ENCODE measurements at regions of chr12 and their contacts with region 1.

Region 1: DNA sequence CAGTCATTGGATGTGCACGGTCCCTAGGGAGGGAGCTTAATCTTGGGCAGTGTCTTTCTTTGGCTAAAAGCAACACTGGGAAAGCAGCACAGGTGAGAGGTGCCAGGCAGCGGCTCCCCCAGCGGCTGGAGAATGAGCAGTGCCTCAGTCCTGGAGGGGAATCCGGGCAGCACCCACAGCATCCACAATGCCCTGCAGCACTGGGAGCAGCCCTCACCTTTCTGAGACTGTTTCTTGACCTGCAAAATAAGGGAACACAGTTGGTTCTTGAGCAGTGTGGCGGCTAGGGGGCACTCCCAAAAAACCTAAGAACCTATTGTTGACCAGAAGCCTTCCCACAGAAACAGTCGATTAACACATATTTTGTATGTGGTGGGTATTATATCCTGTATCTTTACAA is 75.8 kb downstream of the SINHCAF start:
- DNase-seq: no peak
- H3K4me3 Mint-ChIP-seq: no peak overlapping the region
- H3K27ac Mint-ChIP-seq: no peak overlapping the region
- H3K4me1 Mint-ChIP-seq: peaks cover 2% of the 10 kb centered on the region
- H3K27me3 Mint-ChIP-seq: peaks cover 11% of the 10 kb centered on the region

Region 2: DNA sequence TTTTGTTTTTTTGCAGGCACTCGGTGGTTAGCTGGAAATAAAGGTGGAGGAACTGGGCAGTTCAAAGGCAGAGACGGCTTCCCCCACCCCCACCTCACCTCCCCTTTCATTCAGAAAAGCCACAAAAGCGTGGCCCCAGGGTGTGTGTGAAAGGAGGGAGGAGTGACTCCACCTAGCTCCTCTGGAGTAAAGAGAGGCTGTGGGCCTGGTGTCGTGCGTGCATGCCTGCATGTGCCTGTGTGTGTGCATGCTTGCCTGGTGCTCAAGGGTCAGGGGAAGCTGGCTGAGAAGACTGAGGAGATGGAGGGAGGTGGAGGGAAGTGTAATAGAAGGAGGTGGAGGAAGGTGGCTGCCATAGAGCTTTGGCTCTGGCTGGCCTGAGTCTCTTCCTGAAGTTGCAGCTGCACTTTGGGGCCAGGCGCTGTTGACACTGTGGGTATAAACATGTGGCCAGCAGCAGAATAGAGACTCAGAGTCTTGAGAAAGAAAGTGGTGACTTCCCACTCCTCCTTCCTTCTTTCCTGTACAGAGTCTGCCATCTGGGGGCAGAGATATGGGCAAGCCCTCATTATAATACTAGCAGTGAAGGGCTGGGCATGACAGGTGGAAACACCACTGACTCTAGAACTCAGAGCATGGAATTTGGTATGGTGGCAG is 112.7 kb after region 1 on chr12:
- intact Hi-C with region 1: loop called (anchors 5 kb)
- DNase-seq: peak; percentile 81
- H3K4me3 Mint-ChIP-seq: peak overlapping the region; percentile 75
- H3K27ac Mint-ChIP-seq: peak overlapping the region; percentile 94
- H3K4me1 Mint-ChIP-seq: peaks cover 19% of the 10 kb centered on the region
- H3K27me3 Mint-ChIP-seq: no peaks in the 10 kb centered on the region

Region 3: DNA sequence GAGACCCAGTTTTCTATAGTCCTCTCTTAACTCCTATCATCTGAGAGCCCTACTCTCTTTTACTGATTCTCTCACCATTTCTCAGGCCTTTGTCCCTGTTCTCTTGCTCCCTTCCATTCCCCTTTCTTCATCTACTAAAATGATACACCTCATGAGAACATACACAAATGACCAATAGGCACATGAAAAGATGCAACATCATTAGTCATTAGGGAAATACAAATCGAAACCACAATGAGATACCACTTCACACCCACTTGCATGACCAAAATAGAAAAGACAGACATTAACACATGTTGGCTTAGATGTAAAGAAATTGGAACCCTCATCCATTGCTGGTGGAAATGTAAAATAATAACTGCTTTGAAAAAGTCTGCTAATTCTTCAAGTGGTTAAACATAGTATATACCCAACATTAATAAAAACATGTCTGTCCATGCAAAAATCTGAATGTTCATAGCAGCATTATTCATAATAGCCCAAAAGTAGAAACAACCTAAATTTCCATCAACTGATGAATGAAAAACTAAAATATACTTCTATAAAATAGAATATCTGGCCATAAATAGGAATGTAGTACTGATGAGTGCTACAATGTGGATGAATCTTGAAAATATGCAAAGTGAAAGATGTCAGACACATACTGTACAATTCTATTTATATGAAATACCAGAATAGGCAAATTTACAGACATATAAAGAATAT is 274.8 kb after region 1 on chr12:
- intact Hi-C with region 1: no loop called
- DNase-seq: no peak
- H3K4me3 Mint-ChIP-seq: no peak overlapping the region
- H3K27ac Mint-ChIP-seq: no peak overlapping the region
- H3K4me1 Mint-ChIP-seq: peaks cover 2% of the 10 kb centered on the region
- H3K27me3 Mint-ChIP-seq: peaks cover 2% of the 10 kb centered on the region

Measured in activated CD4-positive, alpha-beta T cell treated with anti-CD3 and anti-CD28 coated beads, Interleukin-2, amount 10 ng/mL, durations not matched to agents 24 days and 14 days (primary cell).